PC-3 (cell line): ENCODE measurements at regions of chr10 and their contacts with region 1.

Region 1: GRCh38 chr10:120793088-120793487 is 58.1 kb upstream of the WDR11 start:
- DNase-seq: no peak
- ATAC-seq: no peak
- H3K4me3 ChIP-seq: no peak overlapping the region
- H3K27ac ChIP-seq: no peak overlapping the region
- H3K4me1 ChIP-seq: no peaks in the 10 kb centered on the region
- H3K27me3 ChIP-seq: no peaks in the 10 kb centered on the region
- CTCF ChIP-seq: no peak

Region 2: DNA sequence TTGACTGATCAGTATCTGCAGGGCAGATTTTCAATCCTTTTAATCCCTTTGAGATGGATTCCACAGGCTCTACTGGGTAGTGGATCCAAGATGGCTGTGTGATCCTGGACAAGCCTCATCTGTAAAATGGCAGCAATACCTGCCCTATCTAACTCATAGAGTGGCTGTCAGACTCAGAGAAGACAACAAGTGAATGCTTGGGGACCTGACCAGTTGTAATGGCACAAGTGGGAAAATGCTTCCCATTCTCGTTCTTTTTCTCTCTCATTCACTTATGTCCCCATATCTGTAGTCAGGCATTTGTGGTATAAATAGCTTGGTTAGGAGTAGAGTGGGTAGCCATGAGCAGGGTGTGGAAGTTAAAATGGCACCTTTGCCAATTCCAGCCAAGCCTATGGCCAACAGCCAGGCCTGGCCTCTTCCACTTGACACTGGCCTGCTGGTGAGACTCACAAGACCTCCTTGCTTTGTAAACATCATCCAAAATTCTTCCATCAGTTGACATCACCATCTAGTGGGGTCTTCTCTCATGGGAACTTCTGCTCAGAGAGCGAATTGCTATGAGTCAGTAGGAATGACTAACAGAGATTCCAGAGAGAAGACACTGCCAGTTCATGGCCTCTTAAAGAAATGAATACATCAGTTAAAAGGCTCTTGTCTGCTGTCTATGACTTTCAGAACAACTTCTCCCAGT is 185.9 kb before region 1 on chr10:
- CTCF ChIA-PET with region 1: no interaction called
- POLR2A ChIA-PET with region 1: interaction called, 26 read pairs
- intact Hi-C with region 1: no loop called
- DNase-seq: peak; percentile 80
- ATAC-seq: peak; percentile 88
- H3K4me3 ChIP-seq: no peak overlapping the region
- H3K27ac ChIP-seq: peak overlapping the region; percentile 91
- H3K4me1 ChIP-seq: peaks cover 28% of the 10 kb centered on the region
- H3K27me3 ChIP-seq: no peaks in the 10 kb centered on the region
- CTCF ChIP-seq: no peak